Heart right ventricle (tissue), 16 donors: ENCODE measurements at regions of chr7 and their contacts with region 1.

Region 1: DNA sequence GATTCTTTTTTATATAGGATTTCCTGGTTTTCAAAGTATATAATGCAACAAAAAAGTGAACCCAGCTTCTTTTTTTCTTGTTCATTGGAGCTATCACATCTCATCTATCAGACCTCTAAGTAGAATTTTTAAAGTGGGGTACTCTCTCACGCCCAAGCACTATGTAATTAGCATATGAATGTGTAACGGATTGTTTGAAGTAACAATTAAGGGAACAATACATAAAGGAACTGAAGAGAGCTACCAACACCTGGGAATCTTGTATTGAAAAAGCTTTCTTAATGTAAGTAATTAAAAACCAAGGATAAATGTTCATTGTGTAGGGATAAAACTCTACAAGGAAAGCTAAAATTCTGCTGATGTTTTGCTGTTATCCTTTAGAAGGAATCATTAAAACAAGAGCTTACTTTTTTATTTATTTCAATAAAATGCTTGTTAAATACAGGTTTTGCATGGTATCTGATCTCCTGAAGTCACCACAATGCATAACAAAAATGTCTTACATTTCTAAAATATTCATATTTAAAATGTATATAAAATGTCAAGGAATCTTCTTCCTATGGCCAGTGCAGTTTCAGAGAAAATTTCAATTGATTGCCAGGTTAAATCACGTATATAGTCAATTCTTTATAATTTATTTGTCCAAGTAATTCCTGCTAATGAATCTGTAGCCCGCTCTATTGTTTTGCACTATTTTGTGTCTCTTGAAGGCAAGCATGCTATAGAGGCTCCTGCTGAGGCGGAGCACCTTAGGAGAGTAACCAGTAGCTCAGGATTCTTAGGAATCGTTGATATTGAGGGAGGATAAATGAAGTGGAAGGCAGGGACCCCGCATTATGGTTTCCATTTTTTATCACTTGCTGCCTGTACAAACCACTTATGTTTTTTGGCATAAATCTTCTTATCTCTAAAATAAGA is 51.6 kb downstream of the PTPRZ1 start:
- DNase-seq: no peak
- ATAC-seq: no peak
- H3K4me3 ChIP-seq: no peak overlapping the region
- H3K27ac ChIP-seq: no peak overlapping the region
- H3K4me1 ChIP-seq: no peaks in the 10 kb centered on the region
- H3K27me3 ChIP-seq: no peaks in the 10 kb centered on the region
- CTCF ChIP-seq: no peak

Region 2: GRCh38 chr7:121966276-121966934 is 41.9 kb after region 1 on chr7:
- intact Hi-C with region 1: loop called in 1 of 10 experiments (anchors 2 kb)
- DNase-seq: no peak
- ATAC-seq: no peak
- H3K4me3 ChIP-seq: no peak overlapping the region
- H3K27ac ChIP-seq: no peak overlapping the region
- H3K4me1 ChIP-seq: no peaks in the 10 kb centered on the region
- H3K27me3 ChIP-seq: peaks cover 0 to 5% (median 0%) of the 10 kb centered on the region in 7 donors
- CTCF ChIP-seq: no peak

Region 3: DNA sequence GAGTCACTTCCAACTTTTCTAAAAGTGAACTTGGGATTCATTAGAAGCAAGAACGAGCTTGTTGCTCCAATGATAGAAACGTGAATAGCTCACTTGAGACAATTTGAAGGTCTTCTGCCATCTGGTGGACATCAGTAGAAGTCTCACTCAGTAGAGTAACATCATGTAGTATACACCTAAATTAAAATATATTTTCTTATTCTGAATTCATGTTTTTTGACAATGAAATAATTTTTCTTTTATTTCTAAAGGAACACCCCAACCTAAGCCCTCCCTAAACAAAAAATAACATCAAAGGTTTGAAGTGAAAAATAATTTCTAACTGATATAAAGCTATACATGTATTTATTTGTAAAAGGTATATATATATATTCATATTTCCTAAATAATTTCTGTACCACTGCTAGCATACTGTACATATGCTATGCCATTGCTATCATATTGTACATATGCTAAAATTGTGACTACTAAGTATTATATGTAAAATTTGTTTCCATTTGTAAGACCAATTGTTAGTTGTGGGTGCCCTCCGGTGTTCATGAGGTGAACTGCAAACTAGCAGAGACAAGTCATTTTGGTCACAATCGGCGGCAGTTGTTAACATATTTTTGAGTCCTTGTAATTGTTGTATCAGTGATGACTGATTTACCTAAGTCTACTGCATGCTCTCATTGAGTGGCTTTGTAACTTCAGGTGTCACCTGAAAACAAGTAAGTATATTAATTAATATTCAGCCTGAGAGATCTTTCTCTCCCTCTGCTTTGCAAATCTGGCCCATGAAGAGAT is 70.3 kb after region 1 on chr7:
- intact Hi-C with region 1: no loop called
- DNase-seq: peak; percentile 16 to 19
- ATAC-seq: peak in 5 of 8 donors; percentile 60 to 73 (median 69)
- H3K4me3 ChIP-seq: no peak overlapping the region
- H3K27ac ChIP-seq: no peak overlapping the region
- H3K4me1 ChIP-seq: no peaks in the 10 kb centered on the region
- H3K27me3 ChIP-seq: peaks cover 0 to 5% (median 0%) of the 10 kb centered on the region in 7 donors
- CTCF ChIP-seq: peak; percentile 12 to 66 (median 47)

Region 4: DNA sequence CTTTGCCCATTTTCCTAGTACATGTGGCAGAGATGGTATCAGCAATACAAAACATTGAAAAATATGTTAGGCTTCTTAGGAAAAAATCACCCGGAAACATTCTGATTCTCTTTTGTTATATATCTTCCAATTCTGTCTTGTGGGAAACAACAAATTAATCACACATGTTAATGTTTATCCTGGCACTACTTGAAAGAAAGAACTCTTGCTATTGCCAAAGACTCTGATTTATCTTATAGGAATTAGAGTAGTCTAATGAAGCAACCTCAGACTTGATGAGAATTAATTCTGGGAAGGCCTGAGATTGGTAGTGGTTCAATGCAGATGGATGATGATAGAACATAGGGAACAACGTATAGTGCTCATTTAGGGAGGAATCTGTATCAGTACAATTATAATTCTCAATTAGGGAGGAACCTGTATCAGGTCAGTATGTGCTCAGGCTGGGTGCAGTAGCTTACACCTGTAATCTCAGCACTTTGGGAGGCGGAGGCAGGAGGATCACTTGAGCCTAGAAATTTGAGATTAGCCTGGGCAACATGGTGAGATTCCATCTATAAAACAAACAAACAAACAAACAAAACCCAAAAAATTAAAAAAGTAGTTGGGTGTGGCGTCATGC is 1020.3 kb after region 1 on chr7:
- intact Hi-C with region 1: no loop called
- DNase-seq: no peak
- ATAC-seq: no peak
- H3K4me3 ChIP-seq: no peak overlapping the region
- H3K27ac ChIP-seq: no peak overlapping the region
- H3K4me1 ChIP-seq: no peaks in the 10 kb centered on the region
- H3K27me3 ChIP-seq: peaks cover 0 to 4% (median 0%) of the 10 kb centered on the region in 7 donors
- CTCF ChIP-seq: no peak